ENCODE measurements at regions of chr14 and their contacts with region 1.

Region 1: DNA sequence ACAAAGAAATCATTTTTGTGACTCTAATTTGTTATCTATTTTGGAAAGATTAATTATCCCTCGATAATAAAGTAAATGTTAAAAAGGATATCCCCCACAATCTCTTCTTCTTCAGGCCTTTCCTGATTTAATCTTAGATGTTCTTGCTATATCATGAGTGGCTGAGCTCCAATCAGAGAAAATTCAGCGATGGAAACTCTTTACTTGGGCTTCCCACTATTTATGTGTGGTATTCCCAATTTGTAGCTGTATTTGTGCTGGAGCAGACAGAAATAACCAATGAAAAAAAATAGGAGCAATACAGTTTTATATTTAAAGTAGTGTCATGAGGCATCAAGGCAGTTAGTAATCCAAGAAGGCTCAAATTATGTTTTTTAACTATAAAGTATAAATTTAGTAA is 539.1 kb downstream of the PRKD1 start:
- DNase-seq: no peak
- H3K4me3 ChIP-seq: no peak overlapping the region
- H3K27ac ChIP-seq: no peak overlapping the region
- H3K4me1 ChIP-seq: no peaks in the 10 kb centered on the region
- H3K27me3 ChIP-seq: no peaks in the 10 kb centered on the region
- CTCF ChIP-seq: no peak

Region 2: DNA sequence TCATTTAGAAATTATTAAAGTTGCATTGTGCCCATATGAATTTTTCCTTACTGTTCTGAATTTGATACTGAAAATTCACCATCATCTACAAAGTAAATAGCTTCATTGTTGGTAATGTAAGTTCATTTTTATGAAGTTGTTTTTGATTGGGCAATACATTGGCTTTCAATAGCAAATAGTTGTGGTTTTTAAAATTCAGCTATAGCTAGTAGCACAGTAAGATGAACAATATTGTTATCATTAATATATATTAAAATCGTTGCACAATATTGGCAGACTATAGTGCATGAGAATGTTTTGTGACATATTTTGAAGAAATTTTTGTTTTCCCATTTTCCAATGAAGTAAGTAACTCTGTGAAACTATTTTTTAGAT is 35.9 kb before region 1 on chr14:
- intact Hi-C with region 1: no loop called
- DNase-seq: no peak
- H3K4me3 ChIP-seq: no peak overlapping the region
- H3K27ac ChIP-seq: no peak overlapping the region
- H3K4me1 ChIP-seq: no peaks in the 10 kb centered on the region
- H3K27me3 ChIP-seq: no peaks in the 10 kb centered on the region
- CTCF ChIP-seq: no peak

Region 3: DNA sequence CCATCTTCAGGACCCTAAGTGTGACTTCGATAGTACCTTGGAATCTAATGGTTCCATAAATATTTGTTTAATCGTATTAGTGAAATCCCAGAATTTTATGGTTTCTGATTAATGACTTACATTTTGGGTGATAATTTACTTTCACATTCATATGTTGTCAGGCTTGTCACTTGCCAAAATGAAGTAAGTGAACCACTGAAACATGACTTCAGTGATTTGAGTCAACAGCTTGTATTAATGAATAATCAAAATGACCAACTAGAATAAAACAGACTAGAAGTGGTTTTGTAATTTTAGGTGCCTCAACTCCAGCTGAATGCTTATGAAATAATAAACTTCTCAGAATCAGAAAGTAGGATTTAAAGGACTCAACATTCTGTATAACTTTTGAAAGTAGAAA is 22.0 kb after region 1 on chr14:
- intact Hi-C with region 1: loop called (anchors 2 kb)
- DNase-seq: no peak
- H3K4me3 ChIP-seq: no peak overlapping the region
- H3K27ac ChIP-seq: no peak overlapping the region
- H3K4me1 ChIP-seq: no peaks in the 10 kb centered on the region
- H3K27me3 ChIP-seq: no peaks in the 10 kb centered on the region
- CTCF ChIP-seq: no peak

Region 4: GRCh38 chr14:29927376-29928116 is 539.0 kb after region 1 on chr14 and contains the start of gene PRKD1:
- intact Hi-C with region 1: no loop called
- DNase-seq: peak in 1 of 2 donors; percentile 77
- H3K4me3 ChIP-seq: peak within 1 kb of the TSS; percentile 79 to 85
- H3K27ac ChIP-seq: peak within 1 kb of the TSS; percentile 86 to 90
- H3K4me1 ChIP-seq: peaks cover 0 to 13% of the 10 kb centered on the region in 2 donors
- H3K27me3 ChIP-seq: no peaks in the 10 kb centered on the region
- CTCF ChIP-seq: peak in 1 of 3 experiments; percentile 19
- total RNA-seq, gene PRKD1: 34.6 TPM

Measured in ascending aorta (tissue), 2 donors.